ENCODE measurements at regions of chr12 and their contacts with region 1.

Region 1: GRCh38 chr12:70365648-70366518 is at the start of gene KCNMB4:
- DNase-seq: peak; percentile 23 to 78 (median 55)
- ATAC-seq: peak; percentile 76 to 81 (median 79)
- H3K4me3 ChIP-seq: peak within 1 kb of the TSS; percentile 87 to 90
- H3K4me3 Mint-ChIP-seq: peak within 1 kb of the TSS; percentile 93 to 98 (median 94)
- H3K27ac ChIP-seq: peak within 1 kb of the TSS; percentile 49
- H3K27ac Mint-ChIP-seq: peak within 1 kb of the TSS; percentile 78 to 85
- H3K4me1 ChIP-seq: peaks cover 16 to 18% of the 10 kb centered on the region in 2 experiments
- H3K4me1 Mint-ChIP-seq: peaks cover 27 to 35% (median 27%) of the 10 kb centered on the region in 3 donors
- H3K27me3 ChIP-seq: peaks cover 0 to 14% of the 10 kb centered on the region in 2 experiments
- H3K27me3 Mint-ChIP-seq: peaks cover 0 to 6% of the 10 kb centered on the region in 2 donors
- total RNA-seq, gene KCNMB4: 0.79 to 2.6 (median 1.5) TPM

Region 2: DNA sequence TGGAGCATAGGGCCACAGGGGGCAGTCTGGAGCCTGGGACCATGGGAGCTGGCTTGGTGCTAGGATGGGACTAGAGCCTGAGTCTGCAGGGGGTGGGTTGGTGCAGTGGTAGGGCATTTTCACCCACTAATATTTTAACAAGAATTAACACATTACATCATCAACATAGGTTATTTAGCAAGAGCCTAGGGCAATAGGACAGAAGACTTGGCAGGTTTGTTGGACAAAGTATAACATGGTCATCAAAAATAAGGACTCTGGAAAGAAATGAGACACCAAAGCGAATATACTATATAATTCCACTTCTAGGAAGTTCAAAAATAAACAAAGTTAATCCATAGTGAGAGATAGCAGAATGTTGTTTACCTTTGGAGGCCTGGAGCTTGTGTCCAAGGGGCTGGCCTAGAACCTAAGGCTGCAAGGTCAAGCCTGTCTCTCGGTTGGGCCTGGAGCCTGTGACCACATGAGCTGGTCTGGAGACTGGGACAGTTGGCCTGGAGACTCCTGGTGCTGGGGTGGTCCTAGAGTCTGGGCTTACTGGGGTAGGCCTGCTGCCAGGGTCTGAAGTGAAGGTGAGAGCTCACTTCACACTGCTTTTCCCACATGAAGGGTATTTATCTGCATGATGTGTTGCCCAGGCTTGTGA is 150.8 kb before region 1 on chr12:
- CTCF ChIA-PET with region 1: no interaction called
- POLR2A ChIA-PET with region 1: interaction called in 1 of 2 experiments, 16 read pairs
- DNase-seq: no peak
- ATAC-seq: no peak
- H3K4me3 ChIP-seq: no peak overlapping the region
- H3K4me3 Mint-ChIP-seq: no peak overlapping the region
- H3K27ac ChIP-seq: no peak overlapping the region
- H3K27ac Mint-ChIP-seq: no peak overlapping the region
- H3K4me1 ChIP-seq: no peaks in the 10 kb centered on the region
- H3K4me1 Mint-ChIP-seq: no peaks in the 10 kb centered on the region
- H3K27me3 ChIP-seq: peaks cover 0 to 6% of the 10 kb centered on the region in 2 experiments
- H3K27me3 Mint-ChIP-seq: no peaks in the 10 kb centered on the region

Region 3: GRCh38 chr12:70535896-70536374 is 170.1 kb after region 1 on chr12:
- CTCF ChIA-PET with region 1: no interaction called
- POLR2A ChIA-PET with region 1: no interaction called
- DNase-seq: no peak
- ATAC-seq: no peak
- H3K4me3 ChIP-seq: no peak overlapping the region
- H3K4me3 Mint-ChIP-seq: no peak overlapping the region
- H3K27ac ChIP-seq: no peak overlapping the region
- H3K27ac Mint-ChIP-seq: no peak overlapping the region
- H3K4me1 ChIP-seq: no peaks in the 10 kb centered on the region
- H3K4me1 Mint-ChIP-seq: no peaks in the 10 kb centered on the region
- H3K27me3 ChIP-seq: no peaks in the 10 kb centered on the region
- H3K27me3 Mint-ChIP-seq: no peaks in the 10 kb centered on the region

Region 4: GRCh38 chr12:70590051-70590450 is 224.2 kb after region 1 on chr12:
- CTCF ChIA-PET with region 1: no interaction called
- POLR2A ChIA-PET with region 1: no interaction called
- DNase-seq: peak in 30 of 35 experiments; percentile 3 to 55 (median 29)
- ATAC-seq: peak in 3 of 4 experiments; percentile 38 to 73 (median 45)
- H3K4me3 ChIP-seq: no peak overlapping the region
- H3K4me3 Mint-ChIP-seq: no peak overlapping the region
- H3K27ac ChIP-seq: no peak overlapping the region
- H3K27ac Mint-ChIP-seq: no peak overlapping the region
- H3K4me1 ChIP-seq: no peaks in the 10 kb centered on the region
- H3K4me1 Mint-ChIP-seq: no peaks in the 10 kb centered on the region
- H3K27me3 ChIP-seq: no peaks in the 10 kb centered on the region
- H3K27me3 Mint-ChIP-seq: peaks cover 22 to 26% of the 10 kb centered on the region in 2 donors

Measured in T-cell (primary cell).